ENCODE measurements at regions of chr2 and their contacts with region 1.

Region 1: DNA sequence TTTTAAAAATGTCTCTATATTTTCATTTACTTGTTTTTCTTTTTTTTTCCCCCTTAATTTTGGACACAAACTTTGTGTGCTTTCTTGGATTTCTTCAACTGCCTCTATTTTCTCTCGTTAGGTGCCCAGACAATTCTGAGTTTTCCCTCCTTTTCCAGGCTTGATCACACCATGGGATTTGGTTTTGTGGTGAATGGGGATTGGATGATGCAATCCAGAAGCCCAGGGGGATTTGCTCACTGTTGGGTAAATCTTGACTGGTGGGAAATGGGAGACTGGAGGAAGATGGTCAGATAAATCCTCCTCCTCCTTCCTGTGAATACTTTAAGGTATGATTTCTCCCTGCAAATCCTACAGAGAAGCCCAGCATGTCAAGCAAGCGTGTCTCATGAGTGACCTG is 19.5 kb upstream of the PAX8 start:
- DNase-seq: no peak
- H3K4me3 Mint-ChIP-seq: no peak overlapping the region
- H3K27ac Mint-ChIP-seq: no peak overlapping the region
- H3K4me1 Mint-ChIP-seq: no peaks in the 10 kb centered on the region
- H3K27me3 Mint-ChIP-seq: no peaks in the 10 kb centered on the region

Region 2: DNA sequence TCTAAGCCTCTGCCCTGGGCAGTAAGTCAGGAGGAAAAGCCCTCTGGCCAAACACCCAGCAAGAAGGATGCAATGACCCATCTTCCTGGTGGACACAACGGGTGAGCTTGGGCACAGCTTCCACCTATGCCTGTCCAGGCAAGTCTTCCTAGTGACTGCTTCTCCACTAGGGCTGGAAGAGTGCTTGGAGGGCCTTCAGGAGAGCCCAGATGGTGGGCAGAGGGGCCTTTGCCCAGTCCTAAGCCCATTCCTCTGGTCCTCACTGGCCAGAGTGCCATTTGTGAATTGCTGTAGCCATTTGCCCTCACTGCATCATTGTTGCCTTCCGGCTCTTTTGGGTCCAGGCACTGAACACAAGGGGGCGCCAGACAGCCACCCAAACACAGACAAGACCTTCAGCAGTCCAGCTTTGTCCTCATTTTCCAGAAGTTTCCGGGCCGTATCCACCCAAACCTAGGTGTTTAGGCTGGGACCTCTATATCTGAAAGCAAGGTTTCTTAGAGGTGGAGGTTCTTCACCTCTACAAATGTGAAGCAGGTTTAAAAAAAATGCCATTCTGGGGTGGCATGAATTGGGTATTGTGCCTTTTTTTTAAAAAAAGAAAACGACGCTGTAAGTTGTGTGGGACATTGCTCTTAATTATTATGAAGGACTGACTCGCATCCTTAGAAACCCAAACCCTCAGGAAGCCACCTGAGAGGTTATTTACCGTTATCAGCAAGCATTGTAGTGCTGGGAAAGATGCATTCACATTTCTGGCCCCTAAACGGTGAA is 49.0 kb before region 1 on chr2:
- CTCF ChIA-PET with region 1: interaction called, 4 read pairs
- intact Hi-C with region 1: loop called (anchors 5 kb)
- DNase-seq: peak; percentile 88
- H3K4me3 Mint-ChIP-seq: no peak overlapping the region
- H3K27ac Mint-ChIP-seq: peak overlapping the region; percentile 37
- H3K4me1 Mint-ChIP-seq: peaks cover 48% of the 10 kb centered on the region
- H3K27me3 Mint-ChIP-seq: no peaks in the 10 kb centered on the region

Region 3: GRCh38 chr2:113351375-113352355 is 53.5 kb after region 1 on chr2:
- CTCF ChIA-PET with region 1: no interaction called
- intact Hi-C with region 1: no loop called
- DNase-seq: no peak
- H3K4me3 Mint-ChIP-seq: no peak overlapping the region
- H3K27ac Mint-ChIP-seq: no peak overlapping the region
- H3K4me1 Mint-ChIP-seq: no peaks in the 10 kb centered on the region
- H3K27me3 Mint-ChIP-seq: no peaks in the 10 kb centered on the region

Region 4: GRCh38 chr2:113370478-113371091 is 72.4 kb after region 1 on chr2:
- CTCF ChIA-PET with region 1: no interaction called
- intact Hi-C with region 1: loop called (anchors 1 kb)
- DNase-seq: peak; percentile 86
- H3K4me3 Mint-ChIP-seq: no peak overlapping the region
- H3K27ac Mint-ChIP-seq: no peak overlapping the region
- H3K4me1 Mint-ChIP-seq: peaks cover 5% of the 10 kb centered on the region
- H3K27me3 Mint-ChIP-seq: no peaks in the 10 kb centered on the region

Region 5: GRCh38 chr2:113390124-113390849 is 92.1 kb after region 1 on chr2:
- CTCF ChIA-PET with region 1: interaction called, 3 read pairs
- intact Hi-C with region 1: loop called (anchors 5 kb)
- DNase-seq: peak; percentile 70
- H3K4me3 Mint-ChIP-seq: peak overlapping the region; percentile 35
- H3K27ac Mint-ChIP-seq: peak overlapping the region; percentile 61
- H3K4me1 Mint-ChIP-seq: peaks cover 15% of the 10 kb centered on the region
- H3K27me3 Mint-ChIP-seq: peaks cover 3% of the 10 kb centered on the region

Measured in activated naive CD4-positive, alpha-beta T cell treated with anti-CD3 and anti-CD28 coated beads for 36 hours (primary cell).